Mammary epithelial cell (primary cell): ENCODE measurements at regions of chr5 and their contacts with region 1.

Region 1: DNA sequence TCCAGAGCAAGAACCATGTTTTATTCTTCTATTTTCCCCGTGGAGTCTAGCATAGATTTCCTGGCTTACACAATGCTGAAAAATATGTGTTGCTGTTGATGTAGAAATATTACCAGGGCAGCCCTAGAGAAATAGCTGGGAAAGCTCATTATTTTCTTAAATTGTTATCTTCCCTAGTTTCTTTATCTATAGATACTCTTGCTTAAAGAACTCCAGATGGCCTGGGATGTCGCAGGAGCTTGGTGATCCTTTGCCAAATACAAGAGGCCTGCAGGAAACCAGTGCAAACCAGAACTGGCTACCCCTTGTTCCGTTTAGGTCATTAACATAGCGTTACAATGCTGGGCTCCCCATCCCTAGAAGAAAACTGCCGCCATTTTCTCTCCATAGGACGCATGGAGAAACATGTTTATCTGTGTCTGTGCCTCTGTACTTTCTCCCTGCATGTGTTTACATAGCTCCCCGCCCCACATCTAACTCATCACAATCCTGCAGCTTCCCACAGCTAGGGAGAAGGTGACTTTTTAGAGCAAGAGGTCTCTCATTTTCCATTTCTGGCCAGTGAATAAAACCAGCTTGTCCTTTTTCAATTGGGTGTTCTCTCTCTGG is 6.4 kb downstream of the PRLR start:
- DNase-seq: no peak
- H3K4me3 ChIP-seq: no peak overlapping the region
- H3K27ac ChIP-seq: no peak overlapping the region
- H3K4me1 ChIP-seq: no peaks in the 10 kb centered on the region
- H3K27me3 ChIP-seq: peaks cover 5% of the 10 kb centered on the region
- CTCF ChIP-seq: no peak

Region 2: GRCh38 chr5:35393901-35394300 is 170.0 kb after region 1 on chr5:
- CTCF ChIA-PET with region 1: no interaction called
- dilution Hi-C with region 1: no loop called
- in situ Hi-C with region 1: no loop called
- intact Hi-C with region 1: no loop called
- DNase-seq: no peak
- H3K4me3 ChIP-seq: no peak overlapping the region
- H3K27ac ChIP-seq: no peak overlapping the region
- H3K4me1 ChIP-seq: no peaks in the 10 kb centered on the region
- H3K27me3 ChIP-seq: no peaks in the 10 kb centered on the region
- CTCF ChIP-seq: no peak

Region 3: DNA sequence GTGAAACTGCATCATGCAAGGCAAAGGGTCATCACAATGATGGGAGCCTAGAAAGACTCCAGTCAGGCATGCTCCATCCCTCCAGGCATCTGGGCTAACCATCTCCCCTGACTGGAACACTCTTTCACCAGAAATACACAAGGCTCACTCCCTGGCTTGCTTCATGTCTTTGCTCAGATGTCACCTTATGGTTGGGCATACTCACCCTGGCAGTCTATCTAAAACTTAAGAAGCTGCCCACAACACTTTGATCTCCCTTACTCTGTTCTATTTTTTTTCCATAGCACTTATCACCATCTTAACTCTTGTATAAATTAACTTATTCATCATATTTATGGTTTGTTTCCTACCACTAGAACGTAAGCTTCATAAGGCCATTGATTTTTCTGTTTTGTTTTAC is 483.8 kb after region 1 on chr5:
- CTCF ChIA-PET with region 1: no interaction called
- dilution Hi-C with region 1: no loop called
- in situ Hi-C with region 1: no loop called
- intact Hi-C with region 1: loop called (anchors 5 kb)
- DNase-seq: no peak
- H3K4me3 ChIP-seq: no peak overlapping the region
- H3K27ac ChIP-seq: no peak overlapping the region
- H3K4me1 ChIP-seq: no peaks in the 10 kb centered on the region
- H3K27me3 ChIP-seq: no peaks in the 10 kb centered on the region
- CTCF ChIP-seq: no peak